ENCODE measurements at regions of chr1 and their contacts with region 1.

Region 1: DNA sequence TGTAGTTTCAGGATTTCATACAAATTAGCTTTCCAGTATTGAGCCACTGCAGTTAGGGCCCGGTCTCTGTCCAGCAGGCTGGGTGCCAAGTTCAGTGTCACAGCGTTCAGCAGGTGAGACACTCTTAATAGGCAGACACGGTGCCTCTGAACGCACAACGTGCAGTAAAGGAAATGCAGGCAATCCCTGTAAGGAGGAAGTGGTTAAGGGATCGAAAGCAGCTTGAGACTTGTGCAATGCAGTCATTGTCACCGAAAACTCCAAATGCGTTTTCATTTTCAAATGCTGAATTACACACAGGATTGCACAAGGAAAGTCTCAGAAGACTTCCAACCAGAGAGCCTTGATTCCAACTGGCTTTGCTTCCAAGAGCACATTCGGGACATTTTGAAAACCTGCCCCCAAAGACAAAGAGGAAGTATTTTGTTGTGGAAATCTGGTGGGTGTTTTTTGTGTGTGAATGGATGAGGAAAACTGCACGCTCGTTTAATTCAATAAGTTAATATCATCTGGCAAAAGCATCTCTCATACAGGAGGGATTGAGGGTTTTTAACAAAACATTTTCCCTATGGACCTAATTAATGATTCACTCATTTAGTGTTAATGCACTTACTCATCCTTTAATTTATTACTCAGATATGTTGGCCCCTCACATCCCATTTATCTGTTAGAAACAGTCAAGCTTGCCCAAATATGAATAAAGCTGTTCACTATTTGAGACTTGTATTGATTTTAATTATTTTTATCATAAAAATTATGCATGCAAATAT is 61.6 kb downstream of the PTGS2 start:
- DNase-seq: peak; percentile 92 to 99 (median 99)
- H3K4me3 ChIP-seq: peak overlapping the region; percentile 32 to 65 (median 61)
- H3K4me3 Mint-ChIP-seq: peak overlapping the region; percentile 65 to 90
- H3K27ac ChIP-seq: peak overlapping the region; percentile 91 to 94
- H3K27ac Mint-ChIP-seq: peak overlapping the region; percentile 93 to 99 (median 98)
- H3K4me1 ChIP-seq: peaks cover 54 to 66% of the 10 kb centered on the region in 2 donors
- H3K4me1 Mint-ChIP-seq: peaks cover 50% of the 10 kb centered on the region
- H3K27me3 ChIP-seq: no peaks in the 10 kb centered on the region
- H3K27me3 Mint-ChIP-seq: peaks cover 0 to 2% (median 0%) of the 10 kb centered on the region in 3 donors
- CTCF ChIP-seq: no peak

Region 2: GRCh38 chr1:186574951-186575747 is 43.4 kb before region 1 on chr1:
- intact Hi-C with region 1: no loop called
- DNase-seq: peak in 2 of 3 donors; percentile 8 to 31
- H3K4me3 ChIP-seq: peak overlapping the region in 1 of 3 experiments; percentile 31
- H3K4me3 Mint-ChIP-seq: peak overlapping the region in 1 of 2 donors; percentile 68
- H3K27ac ChIP-seq: no peak overlapping the region
- H3K27ac Mint-ChIP-seq: peak overlapping the region in 3 of 7 donors; percentile 32 to 76 (median 52)
- H3K4me1 ChIP-seq: peaks cover 19 to 25% of the 10 kb centered on the region in 2 donors
- H3K4me1 Mint-ChIP-seq: peaks cover 38% of the 10 kb centered on the region
- H3K27me3 ChIP-seq: no peaks in the 10 kb centered on the region
- H3K27me3 Mint-ChIP-seq: peaks cover 0 to 4% (median 0%) of the 10 kb centered on the region in 3 donors
- CTCF ChIP-seq: no peak

Region 3: DNA sequence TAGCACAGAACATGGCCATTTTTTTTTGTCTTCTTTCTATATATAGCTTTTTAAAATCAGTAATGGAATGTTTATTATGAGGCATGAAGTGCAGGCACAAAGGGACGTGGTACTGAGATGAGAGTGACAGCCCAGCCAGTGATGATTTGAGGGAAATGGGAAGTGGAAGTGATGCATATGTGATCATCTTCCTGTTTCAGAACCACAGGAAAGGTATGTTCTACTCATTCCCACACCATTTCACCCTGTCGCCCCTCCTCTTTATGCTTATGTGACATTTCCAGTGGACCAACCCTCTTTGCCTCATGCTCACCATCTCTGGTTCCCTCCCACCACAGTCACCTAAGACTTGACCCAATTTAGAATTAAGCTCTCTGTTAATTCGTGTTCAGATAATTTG is 37.3 kb after region 1 on chr1:
- intact Hi-C with region 1: loop called (anchors 5 kb)
- DNase-seq: peak; percentile 93 to 95 (median 93)
- H3K4me3 ChIP-seq: peak overlapping the region in 1 of 3 experiments; percentile 19
- H3K4me3 Mint-ChIP-seq: peak overlapping the region in 1 of 2 donors; percentile 36
- H3K27ac ChIP-seq: peak overlapping the region; percentile 76 to 83
- H3K27ac Mint-ChIP-seq: peak overlapping the region; percentile 83 to 95 (median 91)
- H3K4me1 ChIP-seq: peaks cover 83% of the 10 kb centered on the region in 2 donors
- H3K4me1 Mint-ChIP-seq: peaks cover 78% of the 10 kb centered on the region
- H3K27me3 ChIP-seq: no peaks in the 10 kb centered on the region
- H3K27me3 Mint-ChIP-seq: peaks cover 0 to 10% (median 0%) of the 10 kb centered on the region in 3 donors
- CTCF ChIP-seq: no peak

Region 4: GRCh38 chr1:186680245-186681061 is 61.9 kb after region 1 on chr1 and contains the start of gene PTGS2:
- intact Hi-C with region 1: loop called (anchors 10 kb)
- DNase-seq: peak; percentile 90 to 96 (median 93)
- H3K4me3 ChIP-seq: peak within 1 kb of the TSS; percentile 76 to 98 (median 90)
- H3K4me3 Mint-ChIP-seq: peak within 1 kb of the TSS; percentile 97 to 98
- H3K27ac ChIP-seq: peak within 1 kb of the TSS; percentile 95 to 98
- H3K27ac Mint-ChIP-seq: peak within 1 kb of the TSS; percentile 98 to 99 (median 99)
- H3K4me1 ChIP-seq: peaks cover 11 to 36% of the 10 kb centered on the region in 2 donors
- H3K4me1 Mint-ChIP-seq: peaks cover 33% of the 10 kb centered on the region
- H3K27me3 ChIP-seq: no peaks in the 10 kb centered on the region
- H3K27me3 Mint-ChIP-seq: peaks cover 0 to 3% (median 0%) of the 10 kb centered on the region in 3 donors
- CTCF ChIP-seq: peak; percentile 69
- polyA plus RNA-seq, gene PTGS2: 39.2 to 159 (median 113) TPM